Adrenal gland (tissue), 19 donors: ENCODE measurements at regions of chr1 and their contacts with region 1.

Region 1: GRCh38 chr1:67853704-67854103 is 20.4 kb upstream of the GNG12 start:
- DNase-seq: peak; percentile 67 to 91 (median 78)
- H3K4me3 ChIP-seq: no peak overlapping the region
- H3K27ac ChIP-seq: no peak overlapping the region
- H3K4me1 ChIP-seq: peaks cover 5 to 10% of the 10 kb centered on the region in 2 donors
- H3K27me3 ChIP-seq: no peaks in the 10 kb centered on the region
- CTCF ChIP-seq: peak; percentile 80 to 87 (median 84)
- POLR2A ChIP-seq: no peak

Region 2: DNA sequence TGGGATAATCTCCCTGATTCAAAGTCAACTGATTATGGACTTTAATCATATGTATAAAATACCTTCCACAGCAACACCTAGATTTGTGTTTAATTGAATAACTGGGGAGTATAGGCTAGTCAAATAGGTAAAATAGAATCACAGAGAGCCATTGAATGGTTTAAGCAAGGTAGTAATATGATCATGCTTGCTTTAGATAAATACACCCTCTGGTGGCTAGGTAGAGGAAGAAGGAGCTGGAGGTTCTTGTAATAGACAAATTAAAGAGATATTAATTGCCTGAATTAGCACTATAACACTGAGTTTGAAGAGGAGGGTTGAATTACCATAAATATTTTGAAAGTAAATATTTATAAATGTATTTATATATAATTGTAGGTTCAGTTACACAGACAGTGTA is 156.4 kb after region 1 on chr1:
- intact Hi-C with region 1: loop called (anchors 5 kb)
- DNase-seq: no peak
- H3K4me3 ChIP-seq: no peak overlapping the region
- H3K27ac ChIP-seq: no peak overlapping the region
- H3K4me1 ChIP-seq: no peaks in the 10 kb centered on the region
- H3K27me3 ChIP-seq: no peaks in the 10 kb centered on the region
- CTCF ChIP-seq: peak in 5 of 6 experiments; percentile 12 to 57 (median 50)
- POLR2A ChIP-seq: no peak

Region 3: GRCh38 chr1:68111519-68112436 is 258.1 kb after region 1 on chr1:
- intact Hi-C with region 1: loop called (anchors 5 to 10 kb)
- DNase-seq: peak; percentile 71 to 91 (median 82)
- H3K4me3 ChIP-seq: no peak overlapping the region
- H3K27ac ChIP-seq: no peak overlapping the region
- H3K4me1 ChIP-seq: no peaks in the 10 kb centered on the region
- H3K27me3 ChIP-seq: no peaks in the 10 kb centered on the region
- CTCF ChIP-seq: peak; percentile 55 to 81 (median 77)
- POLR2A ChIP-seq: no peak

Region 4: GRCh38 chr1:68281946-68282615 is 428.4 kb after region 1 on chr1:
- intact Hi-C with region 1: no loop called
- DNase-seq: no peak
- H3K4me3 ChIP-seq: no peak overlapping the region
- H3K27ac ChIP-seq: no peak overlapping the region
- H3K4me1 ChIP-seq: no peaks in the 10 kb centered on the region
- H3K27me3 ChIP-seq: no peaks in the 10 kb centered on the region
- CTCF ChIP-seq: no peak
- POLR2A ChIP-seq: no peak

Region 5: DNA sequence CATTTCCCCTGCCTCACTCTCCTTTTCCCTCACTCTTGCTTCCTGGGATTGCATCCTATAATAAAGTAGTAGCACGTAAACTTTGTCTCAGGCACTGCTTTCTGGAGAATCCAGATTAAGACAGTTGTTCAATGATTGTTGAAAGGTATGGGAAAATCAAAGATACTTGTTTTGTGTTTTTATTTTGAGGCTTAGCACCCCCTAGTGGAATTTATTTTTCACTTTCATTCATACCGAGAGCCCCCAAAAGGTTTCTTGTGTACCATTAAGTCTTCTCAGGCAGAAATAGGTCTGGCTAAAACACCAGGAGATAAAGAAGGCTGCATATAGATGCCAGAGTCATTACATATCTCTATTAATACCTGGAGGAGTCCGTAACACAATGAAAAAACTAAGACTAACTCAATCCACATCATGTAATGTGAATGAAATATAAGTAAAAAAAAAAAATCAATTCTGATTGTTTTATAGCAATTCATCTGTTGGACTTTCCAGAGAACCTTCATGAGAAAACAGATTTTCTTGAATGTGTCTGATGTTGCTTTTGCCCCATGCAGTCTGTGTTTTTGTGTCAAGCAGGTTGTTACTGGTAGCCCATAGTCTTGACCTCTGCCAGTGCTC is 492.6 kb after region 1 on chr1:
- intact Hi-C with region 1: loop called in 1 of 2 experiments (anchors 5 kb)
- DNase-seq: no peak
- H3K4me3 ChIP-seq: no peak overlapping the region
- H3K27ac ChIP-seq: no peak overlapping the region
- H3K4me1 ChIP-seq: peaks cover 0 to 2% of the 10 kb centered on the region in 2 donors
- H3K27me3 ChIP-seq: no peaks in the 10 kb centered on the region
- CTCF ChIP-seq: peak; percentile 25 to 55 (median 40)
- POLR2A ChIP-seq: no peak